ENCODE measurements at regions of chr6 and their contacts with region 1.

Region 1: DNA sequence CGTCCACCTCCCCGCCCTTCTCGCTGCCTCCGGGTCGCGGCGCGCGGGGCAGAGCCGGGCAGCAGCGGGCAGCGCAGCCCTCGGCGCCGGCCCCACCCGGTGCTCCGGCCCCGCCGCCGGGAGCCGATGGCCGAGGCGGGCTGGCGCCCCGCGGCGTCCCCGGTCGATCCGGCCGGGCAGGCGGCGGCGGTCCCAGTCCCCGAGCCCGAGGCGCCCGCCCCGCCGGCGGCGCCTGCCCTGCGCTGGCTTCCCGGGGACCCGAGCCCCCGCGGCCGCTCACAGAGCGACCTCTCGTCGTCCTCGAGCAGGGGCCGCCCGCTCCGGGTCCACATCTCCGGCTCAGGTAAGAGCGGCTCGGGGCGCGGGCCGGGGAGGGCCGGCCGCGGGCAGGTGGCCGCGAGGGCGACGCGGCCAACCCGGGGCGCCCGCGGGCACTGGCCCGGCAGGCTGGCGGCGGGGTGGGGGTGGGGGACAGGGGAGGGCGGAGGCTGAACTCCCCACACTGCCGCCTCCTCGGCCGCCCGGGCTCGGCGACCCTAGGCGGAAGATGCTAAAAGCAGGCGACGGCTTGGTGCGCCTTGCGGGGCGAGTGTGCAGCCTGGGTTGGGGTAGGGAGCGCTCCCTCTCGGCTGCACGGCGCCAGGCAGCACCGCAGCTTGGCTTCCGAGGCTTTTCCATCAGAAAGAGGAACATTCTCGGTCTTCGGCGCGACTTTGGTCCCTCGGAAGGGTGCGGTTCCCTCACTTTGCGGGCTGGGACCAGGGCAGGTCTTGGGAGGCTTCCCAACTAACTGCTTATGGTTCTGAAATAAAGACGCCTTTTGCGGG is 25.6 kb upstream of the FUCA2 start:
- DNase-seq: peak; percentile 51
- ATAC-seq: peak; percentile 67
- H3K4me3 Mint-ChIP-seq: peak overlapping the region; percentile 81
- H3K27ac Mint-ChIP-seq: no peak overlapping the region
- H3K4me1 Mint-ChIP-seq: peaks cover 32% of the 10 kb centered on the region
- H3K27me3 Mint-ChIP-seq: no peaks in the 10 kb centered on the region
- CTCF ChIP-seq: no peak

Region 2: DNA sequence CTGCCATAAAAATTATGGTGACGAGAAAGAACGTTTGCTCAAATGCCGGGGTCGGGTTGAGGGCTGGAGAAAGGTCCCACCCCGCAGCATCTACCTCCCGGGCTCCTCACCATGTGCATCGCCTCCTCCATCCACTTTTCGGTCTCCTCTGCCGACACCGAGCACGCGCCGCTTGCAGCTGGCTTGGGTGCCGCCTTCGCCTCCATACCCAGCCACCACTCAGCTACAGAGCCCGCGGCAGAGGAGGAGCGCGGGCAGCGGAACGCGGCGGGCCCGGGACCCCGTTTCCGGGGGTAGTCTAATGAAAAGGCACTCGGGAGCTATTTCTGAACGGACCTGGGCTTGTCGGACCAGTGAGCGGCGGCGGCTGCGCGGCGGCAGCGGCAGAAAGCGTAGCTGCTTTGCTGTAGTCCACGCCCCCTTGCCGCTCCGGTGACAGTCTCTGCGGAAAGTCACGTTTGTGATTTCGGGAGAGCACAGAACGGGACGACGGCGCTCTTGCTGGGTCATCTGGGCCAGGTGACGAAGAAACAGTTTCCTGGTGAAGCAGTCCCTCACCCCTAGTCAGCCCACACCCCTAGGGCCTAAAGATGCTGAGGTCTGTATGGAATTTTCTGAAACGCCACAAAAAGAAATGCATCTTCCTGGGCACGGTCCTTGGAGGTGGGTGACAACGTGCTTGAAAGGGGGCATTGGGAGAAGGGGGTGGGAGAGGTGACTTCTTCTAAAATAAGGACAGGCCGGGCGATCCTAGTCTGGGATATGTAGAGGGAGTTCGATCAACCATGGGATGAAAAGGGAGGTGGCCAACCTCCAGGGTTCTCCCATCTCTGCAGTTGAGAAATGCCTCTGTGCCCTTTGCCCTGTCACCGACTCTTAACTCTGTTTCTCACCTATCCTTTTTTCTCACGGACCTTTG is 86.4 kb before region 1 on chr6 and contains the starts of genes ADAT2 and PEX3:
- CTCF ChIA-PET with region 1: interaction called, 3 read pairs
- POLR2A ChIA-PET with region 1: interaction called, 3 read pairs
- intact Hi-C with region 1: loop called (anchors 1 kb)
- DNase-seq: peak; percentile 90
- ATAC-seq: peak; percentile 91
- H3K4me3 Mint-ChIP-seq: peak within 1 kb of the TSS; percentile 98
- H3K27ac Mint-ChIP-seq: peak within 1 kb of the TSS; percentile 96
- H3K4me1 Mint-ChIP-seq: peaks cover 39% of the 10 kb centered on the region
- H3K27me3 Mint-ChIP-seq: no peaks in the 10 kb centered on the region
- CTCF ChIP-seq: no peak
- total RNA-seq, gene ADAT2: 22.4 and 30.2 TPM in 2 replicates
- total RNA-seq, gene PEX3: 21.7 and 26.5 TPM in 2 replicates

Region 3: DNA sequence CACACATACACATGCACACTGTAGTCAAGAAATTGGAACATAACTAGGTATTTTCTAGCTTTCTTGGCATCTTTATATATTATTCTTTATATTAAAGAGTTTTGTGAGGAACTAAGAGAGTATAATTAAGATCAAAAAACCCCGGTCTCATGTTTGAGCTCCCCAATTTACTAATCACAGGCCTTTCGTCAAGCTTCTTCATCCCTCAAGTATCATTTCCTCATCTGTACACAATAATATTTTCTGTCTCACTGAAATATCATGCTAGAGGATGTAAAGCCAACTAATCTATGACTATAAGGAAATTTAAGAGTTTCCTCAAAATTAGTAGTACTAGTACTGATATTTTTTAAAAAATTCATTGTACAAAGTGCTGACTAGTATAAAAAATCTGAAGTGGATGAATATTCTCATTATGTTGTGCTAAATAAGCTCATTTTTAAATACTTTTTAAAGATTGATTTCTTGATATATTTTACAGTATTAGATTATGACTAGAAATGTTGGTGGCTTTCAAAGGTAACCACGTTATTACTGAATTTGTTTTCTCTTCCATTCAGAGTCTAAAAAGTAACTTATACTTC is 58.5 kb before region 1 on chr6:
- CTCF ChIA-PET with region 1: no interaction called
- POLR2A ChIA-PET with region 1: interaction called, 3 read pairs
- intact Hi-C with region 1: loop called (anchors 2 kb)
- DNase-seq: no peak
- ATAC-seq: peak; percentile 79
- H3K4me3 Mint-ChIP-seq: no peak overlapping the region
- H3K27ac Mint-ChIP-seq: peak overlapping the region; percentile 76
- H3K4me1 Mint-ChIP-seq: peaks cover 15% of the 10 kb centered on the region
- H3K27me3 Mint-ChIP-seq: no peaks in the 10 kb centered on the region
- CTCF ChIP-seq: no peak

Region 4: GRCh38 chr6:143510991-143511891 is 25.8 kb before region 1 on chr6 and contains the start of gene FUCA2:
- CTCF ChIA-PET with region 1: interaction called, 5 read pairs
- POLR2A ChIA-PET with region 1: interaction called, 4 read pairs
- intact Hi-C with region 1: loop called (anchors 1 kb)
- DNase-seq: peak; percentile 47
- ATAC-seq: peak; percentile 69
- H3K4me3 Mint-ChIP-seq: peak within 1 kb of the TSS; percentile 90
- H3K27ac Mint-ChIP-seq: peak within 1 kb of the TSS; percentile 74
- H3K4me1 Mint-ChIP-seq: peaks cover 28% of the 10 kb centered on the region
- H3K27me3 Mint-ChIP-seq: no peaks in the 10 kb centered on the region
- CTCF ChIP-seq: no peak
- total RNA-seq, gene FUCA2: 8.7 and 9.9 TPM in 2 replicates

Region 5: GRCh38 chr6:143555071-143555492 is 18.0 kb after region 1 on chr6:
- CTCF ChIA-PET with region 1: no interaction called
- POLR2A ChIA-PET with region 1: no interaction called
- intact Hi-C with region 1: loop called (anchors 2 kb)
- DNase-seq: no peak
- ATAC-seq: no peak
- H3K4me3 Mint-ChIP-seq: no peak overlapping the region
- H3K27ac Mint-ChIP-seq: no peak overlapping the region
- H3K4me1 Mint-ChIP-seq: peaks cover 4% of the 10 kb centered on the region
- H3K27me3 Mint-ChIP-seq: no peaks in the 10 kb centered on the region
- CTCF ChIP-seq: no peak

Region 6: GRCh38 chr6:143569040-143569439 is 32.0 kb after region 1 on chr6:
- CTCF ChIA-PET with region 1: interaction called, 3 read pairs
- POLR2A ChIA-PET with region 1: no interaction called
- intact Hi-C with region 1: loop called (anchors 1 kb)
- DNase-seq: no peak
- ATAC-seq: no peak
- H3K4me3 Mint-ChIP-seq: no peak overlapping the region
- H3K27ac Mint-ChIP-seq: no peak overlapping the region
- H3K4me1 Mint-ChIP-seq: peaks cover 14% of the 10 kb centered on the region
- H3K27me3 Mint-ChIP-seq: no peaks in the 10 kb centered on the region
- CTCF ChIP-seq: no peak